ENCODE measurements at regions of chr2 and their contacts with region 1.

Region 1: DNA sequence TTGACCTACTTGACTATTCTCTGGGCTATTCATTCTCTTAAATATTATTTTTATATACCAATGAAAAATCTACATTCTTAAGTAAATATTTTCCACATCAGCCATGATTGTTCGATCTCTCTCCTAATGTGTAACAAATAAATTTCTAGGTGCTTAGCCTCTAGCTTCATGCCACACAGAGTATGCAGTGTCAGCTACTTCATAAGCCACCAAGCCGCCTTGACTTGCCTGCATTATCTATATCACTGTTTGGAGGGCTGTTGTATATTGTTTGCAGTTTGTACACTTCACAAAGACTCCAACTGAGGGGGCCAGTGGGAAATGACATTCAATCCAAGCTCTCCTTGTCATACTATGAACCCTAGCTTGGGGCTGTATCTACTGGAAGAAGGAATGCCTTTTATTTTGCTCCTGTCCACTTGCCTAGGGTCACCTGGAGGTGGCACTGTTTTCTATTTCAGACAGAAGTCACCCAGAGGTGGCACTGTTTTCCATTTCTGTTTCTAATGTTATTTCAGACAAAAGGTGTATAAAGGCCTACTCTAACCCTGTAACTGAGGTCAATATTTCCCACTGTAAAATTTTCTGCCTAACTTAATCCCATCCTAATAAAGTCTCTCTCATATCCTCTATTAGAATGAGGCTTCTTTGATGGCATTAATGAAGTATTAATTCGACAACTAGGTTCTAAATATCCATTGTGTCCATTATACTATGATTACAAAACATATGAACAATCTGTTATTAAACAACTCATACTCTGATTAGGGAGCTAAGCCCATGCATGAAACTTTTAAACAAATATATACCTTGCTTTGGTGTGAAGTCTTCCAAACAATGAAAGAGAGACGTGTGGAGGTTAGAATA is 36.4 kb downstream of the COL5A2 start:
- DNase-seq: peak; percentile 59
- ATAC-seq: peak; percentile 90
- H3K4me3 Mint-ChIP-seq: no peak overlapping the region
- H3K27ac Mint-ChIP-seq: no peak overlapping the region
- H3K4me1 Mint-ChIP-seq: no peaks in the 10 kb centered on the region
- H3K27me3 Mint-ChIP-seq: no peaks in the 10 kb centered on the region

Region 2: DNA sequence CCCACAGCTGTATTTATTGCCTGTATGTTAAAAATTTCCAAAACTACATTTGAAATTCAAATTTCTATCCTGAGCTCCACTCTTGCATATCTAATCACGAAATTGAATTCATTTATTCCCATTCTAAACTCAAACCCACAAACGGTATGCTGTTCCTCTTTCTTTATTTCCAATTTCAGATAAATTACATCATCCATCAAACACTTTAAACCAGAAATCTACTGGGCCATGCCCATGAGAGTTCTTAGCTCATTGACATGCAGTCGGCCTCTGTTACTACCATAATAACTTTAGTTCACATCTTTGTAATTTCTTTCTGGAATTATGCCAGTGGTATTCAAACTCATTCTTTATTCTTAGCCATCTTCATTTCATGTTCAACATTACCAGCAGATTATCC is 68.6 kb before region 1 on chr2:
- CTCF ChIA-PET with region 1: interaction called, 10 read pairs
- POLR2A ChIA-PET with region 1: no interaction called
- intact Hi-C with region 1: no loop called
- DNase-seq: no peak
- ATAC-seq: no peak
- H3K4me3 Mint-ChIP-seq: no peak overlapping the region
- H3K27ac Mint-ChIP-seq: no peak overlapping the region
- H3K4me1 Mint-ChIP-seq: no peaks in the 10 kb centered on the region
- H3K27me3 Mint-ChIP-seq: no peaks in the 10 kb centered on the region

Region 3: GRCh38 chr2:189131991-189132390 is 11.1 kb before region 1 on chr2:
- CTCF ChIA-PET with region 1: interaction called, 11 read pairs
- POLR2A ChIA-PET with region 1: no interaction called
- intact Hi-C with region 1: no loop called
- DNase-seq: no peak
- ATAC-seq: no peak
- H3K4me3 Mint-ChIP-seq: no peak overlapping the region
- H3K27ac Mint-ChIP-seq: no peak overlapping the region
- H3K4me1 Mint-ChIP-seq: no peaks in the 10 kb centered on the region
- H3K27me3 Mint-ChIP-seq: peaks cover 5% of the 10 kb centered on the region

Region 4: GRCh38 chr2:189204322-189204941 is 61.3 kb after region 1 on chr2:
- CTCF ChIA-PET with region 1: no interaction called
- POLR2A ChIA-PET with region 1: no interaction called
- intact Hi-C with region 1: no loop called
- DNase-seq: no peak
- ATAC-seq: no peak
- H3K4me3 Mint-ChIP-seq: no peak overlapping the region
- H3K27ac Mint-ChIP-seq: peak overlapping the region; percentile 40
- H3K4me1 Mint-ChIP-seq: peaks cover 12% of the 10 kb centered on the region
- H3K27me3 Mint-ChIP-seq: no peaks in the 10 kb centered on the region

Region 5: GRCh38 chr2:189287982-189288521 is 144.9 kb after region 1 on chr2:
- CTCF ChIA-PET with region 1: interaction called, 22 read pairs
- POLR2A ChIA-PET with region 1: no interaction called
- intact Hi-C with region 1: loop called (anchors 1 kb)
- DNase-seq: no peak
- ATAC-seq: peak; percentile 85
- H3K4me3 Mint-ChIP-seq: no peak overlapping the region
- H3K27ac Mint-ChIP-seq: peak overlapping the region; percentile 23
- H3K4me1 Mint-ChIP-seq: peaks cover 48% of the 10 kb centered on the region
- H3K27me3 Mint-ChIP-seq: no peaks in the 10 kb centered on the region

Region 6: DNA sequence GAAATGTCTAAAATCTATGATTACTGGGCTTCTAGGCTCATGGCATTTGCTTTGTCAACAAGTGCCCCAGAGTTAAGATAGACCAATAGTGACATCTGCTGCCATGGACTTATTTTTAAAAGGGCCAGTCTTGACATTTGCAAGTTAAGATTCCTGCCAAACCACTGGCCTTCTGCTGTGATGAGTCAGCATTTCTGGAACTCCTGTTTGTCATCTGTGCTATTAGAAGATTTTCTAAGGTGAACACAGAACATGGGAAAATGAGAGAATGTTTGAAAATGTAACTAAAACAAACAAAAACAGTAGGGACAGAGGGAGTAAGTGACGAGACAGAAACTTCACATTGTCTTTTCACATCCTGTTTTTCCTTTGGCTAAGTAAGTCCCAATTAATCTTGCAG is 204.4 kb after region 1 on chr2:
- CTCF ChIA-PET with region 1: interaction called, 7 read pairs
- POLR2A ChIA-PET with region 1: no interaction called
- intact Hi-C with region 1: loop called (anchors 2 kb)
- DNase-seq: peak; percentile 6
- ATAC-seq: peak; percentile 12
- H3K4me3 Mint-ChIP-seq: no peak overlapping the region
- H3K27ac Mint-ChIP-seq: no peak overlapping the region
- H3K4me1 Mint-ChIP-seq: peaks cover 12% of the 10 kb centered on the region
- H3K27me3 Mint-ChIP-seq: no peaks in the 10 kb centered on the region

Region 7: DNA sequence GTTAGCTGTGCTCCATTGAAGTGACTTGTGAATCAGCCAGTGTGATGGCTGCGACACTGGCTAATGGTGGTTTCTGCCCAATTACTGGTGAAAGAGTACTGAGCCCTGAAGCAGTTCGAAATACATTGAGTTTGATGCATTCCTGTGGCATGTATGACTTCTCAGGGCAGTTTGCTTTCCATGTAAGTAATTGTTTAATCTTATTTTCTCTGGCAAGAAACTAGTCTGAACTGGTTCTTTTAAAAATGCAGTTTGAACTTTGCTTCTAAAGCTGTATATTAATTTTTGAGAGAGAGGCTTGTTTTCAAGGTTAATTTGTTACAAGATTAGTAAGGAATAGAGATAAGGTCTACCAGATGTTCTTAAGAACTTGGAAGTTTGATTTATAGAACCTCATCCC is 1784.2 kb after region 1 on chr2:
- CTCF ChIA-PET with region 1: no interaction called
- POLR2A ChIA-PET with region 1: no interaction called
- intact Hi-C with region 1: no loop called
- DNase-seq: no peak
- ATAC-seq: no peak
- H3K4me3 Mint-ChIP-seq: no peak overlapping the region
- H3K27ac Mint-ChIP-seq: no peak overlapping the region
- H3K4me1 Mint-ChIP-seq: peaks cover 15% of the 10 kb centered on the region
- H3K27me3 Mint-ChIP-seq: no peaks in the 10 kb centered on the region